Activated T-helper 1 cell treated with anti-CD3 and anti-CD28 coated beads, Interleukin-12 subunit alpha, Interleukin-12 subunit beta, Interleukin-2, Interleukin-4 antibody, amounts not matched to agents 30 ng/mL and 10 ng/mL and 1 ng/mL, durations not matched to agents 14 hours and 24 hours and 36 hours (primary cell): ENCODE measurements at regions of chr1 and their contacts with region 1.

Region 1: GRCh38 chr1:97920832-97921571 is at the start of gene DPYD:
- DNase-seq: peak; percentile 81
- H3K4me3 Mint-ChIP-seq: peak within 1 kb of the TSS; percentile 93
- H3K27ac Mint-ChIP-seq: peak within 1 kb of the TSS; percentile 93
- H3K4me1 Mint-ChIP-seq: peaks cover 66% of the 10 kb centered on the region
- H3K27me3 Mint-ChIP-seq: no peaks in the 10 kb centered on the region
- total RNA-seq, gene DPYD: 16.2 and 17.9 TPM in 2 replicates

Region 2: GRCh38 chr1:97379387-97380075 is 541.5 kb before region 1 on chr1:
- intact Hi-C with region 1: no loop called
- DNase-seq: no peak
- H3K4me3 Mint-ChIP-seq: no peak overlapping the region
- H3K27ac Mint-ChIP-seq: no peak overlapping the region
- H3K4me1 Mint-ChIP-seq: peaks cover 7% of the 10 kb centered on the region
- H3K27me3 Mint-ChIP-seq: no peaks in the 10 kb centered on the region

Region 3: GRCh38 chr1:97791251-97791650 is 129.8 kb before region 1 on chr1:
- intact Hi-C with region 1: loop called (anchors 2 kb)
- DNase-seq: no peak
- H3K4me3 Mint-ChIP-seq: peak overlapping the region; percentile 65
- H3K27ac Mint-ChIP-seq: peak overlapping the region; percentile 84
- H3K4me1 Mint-ChIP-seq: peaks cover 35% of the 10 kb centered on the region
- H3K27me3 Mint-ChIP-seq: no peaks in the 10 kb centered on the region

Region 4: GRCh38 chr1:97864615-97865014 is 56.4 kb before region 1 on chr1:
- intact Hi-C with region 1: loop called (anchors 5 kb)
- DNase-seq: no peak
- H3K4me3 Mint-ChIP-seq: no peak overlapping the region
- H3K27ac Mint-ChIP-seq: no peak overlapping the region
- H3K4me1 Mint-ChIP-seq: peaks cover 17% of the 10 kb centered on the region
- H3K27me3 Mint-ChIP-seq: no peaks in the 10 kb centered on the region

Region 5: GRCh38 chr1:98030483-98030882 is 109.5 kb after region 1 on chr1:
- intact Hi-C with region 1: loop called (anchors 5 kb)
- DNase-seq: no peak
- H3K4me3 Mint-ChIP-seq: no peak overlapping the region
- H3K27ac Mint-ChIP-seq: no peak overlapping the region
- H3K4me1 Mint-ChIP-seq: peaks cover 6% of the 10 kb centered on the region
- H3K27me3 Mint-ChIP-seq: peaks cover 10% of the 10 kb centered on the region

Region 6: GRCh38 chr1:98870959-98871903 is 950.2 kb after region 1 on chr1:
- intact Hi-C with region 1: loop called (anchors 10 kb)
- DNase-seq: peak; percentile 52
- H3K4me3 Mint-ChIP-seq: peak overlapping the region; percentile 75
- H3K27ac Mint-ChIP-seq: peak overlapping the region; percentile 92
- H3K4me1 Mint-ChIP-seq: peaks cover 18% of the 10 kb centered on the region
- H3K27me3 Mint-ChIP-seq: no peaks in the 10 kb centered on the region